SK-MEL-5 (cell line): ENCODE measurements at regions of chr7 and their contacts with region 1.

Region 1: DNA sequence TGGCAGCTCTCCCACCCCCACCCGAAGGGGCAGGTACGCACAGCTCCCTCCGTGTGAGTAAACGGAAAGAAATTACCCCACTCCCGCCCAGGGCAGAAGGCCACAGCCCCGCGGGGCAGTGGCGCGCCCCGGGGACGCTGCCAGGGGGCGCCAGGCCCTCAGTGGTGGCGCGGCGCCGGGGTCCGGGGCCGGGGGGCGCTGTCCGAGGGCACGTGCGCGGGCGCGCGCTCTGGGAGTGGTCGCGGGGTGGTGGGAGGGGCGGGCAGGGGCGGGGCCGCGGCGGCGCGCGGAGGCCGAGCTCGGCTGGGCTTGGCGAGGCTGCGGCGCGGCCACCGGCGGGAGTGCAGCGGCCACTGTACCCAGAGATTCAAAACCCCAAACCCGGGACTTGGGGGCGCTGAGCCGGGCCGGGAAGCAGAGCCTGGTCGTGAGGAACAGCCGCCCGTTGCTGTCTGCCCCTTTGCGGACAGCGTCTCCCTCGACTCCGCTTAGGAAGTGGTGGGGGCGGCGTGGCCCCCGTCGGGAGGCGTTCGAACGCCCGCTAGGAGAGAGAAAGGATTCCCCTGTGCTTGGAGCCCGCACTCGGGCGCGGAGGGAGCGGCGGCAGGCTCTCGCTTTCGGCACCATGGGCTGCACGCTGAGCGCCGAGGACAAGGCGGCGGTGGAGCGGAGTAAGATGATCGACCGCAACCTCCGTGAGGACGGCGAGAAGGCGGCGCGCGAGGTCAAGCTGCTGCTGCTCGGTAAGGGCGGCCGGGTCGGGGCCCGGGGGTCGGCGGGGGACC is at the start of gene GNAI1:
- DNase-seq: peak; percentile 85
- total RNA-seq, gene GNAI1: 54.9 and 59.5 TPM in 2 replicates

Region 2: GRCh38 chr7:80095545-80095944 is 39.2 kb before region 1 on chr7:
- in situ Hi-C with region 1: loop called (anchors 5 kb)
- DNase-seq: peak; percentile 56

Region 3: GRCh38 chr7:80189638-80190037 is 54.9 kb after region 1 on chr7:
- in situ Hi-C with region 1: loop called (anchors 10 kb)
- DNase-seq: no peak

Region 4: DNA sequence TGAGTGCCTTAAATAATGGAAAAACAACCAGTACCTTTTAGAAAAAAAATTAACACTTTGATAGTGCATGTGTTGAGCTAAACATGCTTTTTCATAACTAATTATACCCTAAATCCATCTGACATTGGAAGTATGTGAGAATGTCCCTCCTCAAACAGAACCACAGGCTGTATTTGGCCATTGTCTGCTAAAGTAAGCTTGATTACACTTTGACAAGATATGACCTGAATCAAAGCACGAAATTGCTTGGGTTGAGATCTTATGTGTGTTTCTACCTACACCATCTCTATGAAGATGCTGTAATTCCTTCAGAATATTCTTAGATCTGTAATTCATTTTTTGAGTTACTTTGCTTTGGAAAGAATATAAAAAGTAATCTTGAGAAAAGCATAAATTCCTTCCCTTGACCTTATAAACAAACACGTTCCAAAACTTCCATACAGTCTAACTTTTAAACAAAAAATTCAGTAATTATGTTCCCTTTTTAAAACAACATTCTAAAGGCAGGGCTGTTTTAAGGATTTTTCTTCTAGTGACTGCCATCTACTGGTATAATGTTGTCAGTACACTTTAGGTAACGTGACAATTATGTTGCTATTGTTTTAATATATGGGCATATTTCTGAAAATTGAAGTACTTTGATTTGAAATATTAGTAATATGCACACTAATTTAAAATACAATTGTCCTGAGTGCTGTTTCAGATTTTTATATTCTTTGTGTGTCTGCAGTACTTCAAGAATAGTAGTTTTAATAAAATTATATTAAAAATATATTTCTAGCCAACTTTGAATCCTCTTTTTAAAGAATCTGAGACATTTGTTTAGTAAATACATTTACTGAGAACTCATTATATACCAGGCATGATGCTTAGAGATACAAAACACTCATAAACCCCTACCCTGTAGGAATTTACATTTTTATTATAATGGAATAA is 524.7 kb after region 1 on chr7:
- in situ Hi-C with region 1: loop called (anchors 25 kb)
- DNase-seq: peak; percentile 68